GM10248 (cell line): ENCODE measurements at regions of chr16 and their contacts with region 1.

Region 1: GRCh38 chr16:46853713-46854443 is 22.9 kb upstream of the C16orf87 start:
- DNase-seq: peak; percentile 78
- CTCF ChIP-seq: peak; percentile 65

Region 2: DNA sequence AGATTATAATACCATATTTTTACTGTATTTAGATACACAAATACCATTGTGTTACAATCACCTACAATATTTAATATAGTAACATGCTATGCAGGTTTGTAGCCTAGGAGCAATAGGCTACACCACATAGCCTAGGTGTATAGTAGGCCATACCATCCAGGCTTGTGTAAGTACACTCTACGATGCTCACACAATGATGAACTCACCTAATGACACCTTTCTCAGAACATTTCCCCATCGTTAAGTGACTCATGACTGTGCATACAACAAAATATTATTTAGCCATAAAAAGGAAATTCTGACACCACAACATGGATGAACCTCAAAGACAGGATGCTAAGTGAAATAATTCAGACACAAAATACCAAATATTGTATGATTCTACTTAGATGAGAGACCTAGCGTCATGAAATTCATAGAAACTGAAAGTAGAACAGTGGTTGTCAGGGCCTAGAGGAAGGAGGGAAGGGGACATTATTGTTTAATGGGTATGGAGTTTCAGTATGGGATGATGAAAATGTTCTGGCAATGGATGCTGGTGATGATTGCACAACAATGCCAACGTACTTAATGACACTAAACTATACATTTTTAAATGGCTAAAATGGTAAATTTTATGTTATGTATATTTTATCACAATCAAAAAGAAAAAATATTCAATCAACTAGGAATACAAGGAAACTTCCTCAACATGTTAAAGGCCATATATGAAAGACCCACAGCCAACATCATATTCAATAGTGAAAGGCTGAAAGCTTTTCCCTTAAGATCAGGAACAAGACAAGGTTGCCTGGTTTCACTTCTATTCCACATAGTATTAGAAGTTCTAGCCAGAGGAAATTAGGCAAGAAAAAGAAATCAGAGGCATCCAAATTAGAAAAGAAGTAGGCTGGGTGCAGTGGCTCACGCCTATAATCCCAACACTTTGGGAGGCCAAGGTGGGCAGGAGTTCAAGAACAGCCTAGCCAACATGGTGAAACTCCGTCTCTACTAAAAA is 17.0 kb before region 1 on chr16:
- CTCF ChIA-PET with region 1: interaction called, 15 read pairs
- POLR2A ChIA-PET with region 1: no interaction called
- DNase-seq: no peak
- CTCF ChIP-seq: no peak

Region 3: DNA sequence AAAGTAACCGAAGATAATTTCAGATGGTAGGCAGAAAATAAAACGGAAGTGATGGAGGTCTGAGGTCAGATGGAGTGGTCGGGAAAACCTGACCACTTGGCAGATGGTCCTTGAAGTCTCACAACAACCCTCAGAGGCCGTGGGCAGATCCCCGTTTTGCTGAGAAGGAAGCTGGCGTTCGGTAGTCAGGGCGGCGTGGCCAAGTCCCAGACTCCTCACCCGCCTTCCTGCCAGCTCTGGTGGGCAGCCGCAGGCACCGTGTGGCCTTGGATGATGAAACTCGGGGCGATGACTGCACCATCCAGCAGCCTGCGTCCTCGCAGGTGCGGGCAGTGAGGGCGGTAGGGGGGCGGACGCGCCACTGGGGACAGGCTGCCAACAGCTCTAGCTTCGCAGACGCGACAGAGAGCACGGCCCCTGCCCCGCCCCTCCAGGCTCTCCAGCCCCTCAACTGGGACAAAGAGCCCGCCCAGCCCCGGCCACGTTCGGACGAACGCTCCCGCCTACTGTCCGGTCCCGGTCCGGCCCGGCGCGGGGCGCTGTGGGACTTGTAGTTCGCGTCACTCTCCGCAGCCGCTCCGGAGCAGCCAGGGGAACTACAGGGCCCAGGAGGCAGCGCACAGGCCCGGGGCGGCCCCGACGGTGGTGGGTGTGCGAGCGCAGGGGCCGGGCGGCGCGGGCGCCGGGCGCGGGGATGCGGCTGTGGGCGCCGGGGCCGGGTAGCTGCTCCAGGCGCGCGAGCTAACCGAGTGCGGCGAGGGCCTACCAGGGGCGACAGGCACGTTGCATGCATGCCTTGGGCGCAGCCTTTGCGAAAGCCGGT is 30.0 kb after region 1 on chr16 and contains the start of gene GPT2:
- CTCF ChIA-PET with region 1: interaction called, 14 read pairs
- POLR2A ChIA-PET with region 1: no interaction called
- DNase-seq: peak; percentile 92
- CTCF ChIP-seq: no peak

Region 4: GRCh38 chr16:46918861-46919792 is 65.2 kb after region 1 on chr16:
- CTCF ChIA-PET with region 1: interaction called, 96 read pairs
- POLR2A ChIA-PET with region 1: interaction called, 3 read pairs
- DNase-seq: peak; percentile 86
- CTCF ChIP-seq: peak; percentile 49

Region 5: DNA sequence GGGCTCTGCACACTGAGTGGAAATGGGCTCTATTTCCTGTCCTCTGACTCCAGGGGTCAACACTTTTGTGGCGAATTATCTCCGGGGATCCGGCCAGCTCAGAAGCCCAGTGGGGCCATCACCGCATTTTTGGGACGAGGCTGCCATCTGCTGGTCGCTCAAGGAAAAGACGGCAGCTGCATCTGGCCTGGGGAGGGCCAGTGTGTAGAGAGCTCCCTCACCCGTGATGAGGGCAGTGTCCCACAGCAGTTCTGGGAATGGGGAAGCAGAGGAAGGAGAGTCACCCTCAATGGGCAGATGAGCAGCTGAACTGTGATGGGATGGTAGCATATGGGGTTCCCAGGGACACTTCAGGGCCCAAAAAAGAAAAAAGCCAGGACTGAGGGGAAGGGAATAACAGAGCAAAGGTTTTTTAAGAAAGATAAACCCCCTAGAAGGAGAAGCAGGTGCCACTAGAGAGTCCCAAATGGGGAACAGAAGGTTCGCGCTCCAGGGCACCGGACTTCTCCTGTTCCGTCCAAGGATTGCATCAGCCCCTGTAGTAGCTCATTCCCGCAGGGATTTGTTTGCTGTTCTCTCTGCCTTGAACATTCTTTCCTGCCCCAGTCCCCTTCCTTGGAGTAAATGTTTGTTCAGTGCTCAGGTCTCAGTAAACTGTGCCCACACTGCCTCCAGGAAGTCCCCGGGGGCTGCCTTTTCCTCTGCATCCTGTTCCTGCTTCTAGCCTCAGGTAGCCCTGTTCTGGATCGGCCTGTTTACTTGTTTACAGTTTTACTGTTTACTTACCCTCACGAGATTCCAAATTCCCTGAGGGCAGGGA is 1311.2 kb after region 1 on chr16:
- CTCF ChIA-PET with region 1: interaction called, 13 read pairs
- POLR2A ChIA-PET with region 1: no interaction called
- DNase-seq: peak; percentile 83
- CTCF ChIP-seq: peak; percentile 95